H1 (cell line): ENCODE measurements at regions of chr20 and their contacts with region 1.

Region 1: GRCh38 chr20:324177-325044 is 941 bp upstream of the SOX12 start:
- DNase-seq: peak in 1 of 2 experiments; percentile 95
- H3K4me3 ChIP-seq: peak overlapping the region; percentile 63 to 92 (median 73)
- H3K27ac ChIP-seq: peak overlapping the region; percentile 69
- H3K4me1 ChIP-seq: peaks cover 4 to 27% (median 17%) of the 10 kb centered on the region in 4 experiments
- H3K27me3 ChIP-seq: no peaks in the 10 kb centered on the region
- CTCF ChIP-seq: peak; percentile 26 to 44 (median 33); a peak in 3 of 4 replicates
- EP300 ChIP-seq: peak in 1 of 2 experiments; percentile 22; a peak in 1 of 3 replicates
- POLR2A ChIP-seq: peak in 1 of 2 experiments; percentile 56; a peak in 2 of 3 replicates
- RAD21 ChIP-seq: peak; percentile 20 to 42

Region 2: GRCh38 chr20:251354-251753 is 73.1 kb before region 1 on chr20:
- CTCF ChIA-PET with region 1: no interaction called
- POLR2A ChIA-PET with region 1: no interaction called
- DNase-seq: no peak
- H3K4me3 ChIP-seq: no peak overlapping the region
- H3K27ac ChIP-seq: no peak overlapping the region
- H3K4me1 ChIP-seq: 0 out of 7 replicates have a peak, but pooled peaks cover 0 to 2% (median 0%) of the 10 kb centered on the region in 4 experiments
- H3K27me3 ChIP-seq: peaks cover 21 to 52% (median 48%) of the 10 kb centered on the region in 4 experiments
- CTCF ChIP-seq: no peak
- EP300 ChIP-seq: no peak
- POLR2A ChIP-seq: no peak
- RAD21 ChIP-seq: no peak

Region 3: GRCh38 chr20:266596-267562 is 57.5 kb before region 1 on chr20:
- CTCF ChIA-PET with region 1: interaction called, 45 read pairs
- POLR2A ChIA-PET with region 1: interaction called, 9 read pairs
- DNase-seq: peak; percentile 84 to 99
- H3K4me3 ChIP-seq: peak overlapping the region; percentile 4 to 53 (median 31); a peak in 6 of 8 replicates
- H3K27ac ChIP-seq: no peak overlapping the region
- H3K4me1 ChIP-seq: 0 out of 7 replicates have a peak, but pooled peaks cover 0 to 2% (median 0%) of the 10 kb centered on the region in 4 experiments
- H3K27me3 ChIP-seq: peaks cover 0 to 26% (median 11%) of the 10 kb centered on the region in 4 experiments; a peak in 6 of 7 replicates
- CTCF ChIP-seq: peak; percentile 96 to 98 (median 97)
- EP300 ChIP-seq: no peak
- POLR2A ChIP-seq: peak in 1 of 2 experiments; percentile 94; a peak in 2 of 3 replicates
- RAD21 ChIP-seq: peak; percentile 95

Region 4: DNA sequence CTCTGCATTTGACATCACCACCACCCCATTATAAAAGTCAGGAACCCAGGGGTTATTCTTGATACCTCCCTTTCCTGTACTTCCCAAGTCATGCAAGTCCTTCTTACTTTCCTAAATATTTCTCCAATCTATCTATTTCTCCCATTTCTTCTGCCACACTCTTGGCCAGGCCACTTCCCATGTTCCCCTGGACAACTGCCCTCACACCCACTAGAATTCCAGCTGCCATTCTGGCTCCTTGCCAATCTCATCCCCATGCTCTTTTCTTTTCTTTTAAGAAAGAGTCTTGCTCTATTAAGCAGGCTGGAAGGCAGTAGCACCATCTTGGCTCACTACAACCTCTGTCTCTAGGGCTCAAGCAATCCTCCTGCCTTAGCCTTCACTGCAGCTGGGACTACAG is 51.7 kb before region 1 on chr20:
- CTCF ChIA-PET with region 1: interaction called, 54 read pairs
- POLR2A ChIA-PET with region 1: interaction called, 28 read pairs
- DNase-seq: no peak
- H3K4me3 ChIP-seq: no peak overlapping the region
- H3K27ac ChIP-seq: no peak overlapping the region
- H3K4me1 ChIP-seq: peaks cover 0 to 4% (median 2%) of the 10 kb centered on the region in 4 experiments; a peak in 4 of 7 replicates
- H3K27me3 ChIP-seq: no peaks in the 10 kb centered on the region; a peak in 1 of 7 replicates
- CTCF ChIP-seq: no peak
- EP300 ChIP-seq: no peak
- POLR2A ChIP-seq: no peak
- RAD21 ChIP-seq: no peak

Region 5: DNA sequence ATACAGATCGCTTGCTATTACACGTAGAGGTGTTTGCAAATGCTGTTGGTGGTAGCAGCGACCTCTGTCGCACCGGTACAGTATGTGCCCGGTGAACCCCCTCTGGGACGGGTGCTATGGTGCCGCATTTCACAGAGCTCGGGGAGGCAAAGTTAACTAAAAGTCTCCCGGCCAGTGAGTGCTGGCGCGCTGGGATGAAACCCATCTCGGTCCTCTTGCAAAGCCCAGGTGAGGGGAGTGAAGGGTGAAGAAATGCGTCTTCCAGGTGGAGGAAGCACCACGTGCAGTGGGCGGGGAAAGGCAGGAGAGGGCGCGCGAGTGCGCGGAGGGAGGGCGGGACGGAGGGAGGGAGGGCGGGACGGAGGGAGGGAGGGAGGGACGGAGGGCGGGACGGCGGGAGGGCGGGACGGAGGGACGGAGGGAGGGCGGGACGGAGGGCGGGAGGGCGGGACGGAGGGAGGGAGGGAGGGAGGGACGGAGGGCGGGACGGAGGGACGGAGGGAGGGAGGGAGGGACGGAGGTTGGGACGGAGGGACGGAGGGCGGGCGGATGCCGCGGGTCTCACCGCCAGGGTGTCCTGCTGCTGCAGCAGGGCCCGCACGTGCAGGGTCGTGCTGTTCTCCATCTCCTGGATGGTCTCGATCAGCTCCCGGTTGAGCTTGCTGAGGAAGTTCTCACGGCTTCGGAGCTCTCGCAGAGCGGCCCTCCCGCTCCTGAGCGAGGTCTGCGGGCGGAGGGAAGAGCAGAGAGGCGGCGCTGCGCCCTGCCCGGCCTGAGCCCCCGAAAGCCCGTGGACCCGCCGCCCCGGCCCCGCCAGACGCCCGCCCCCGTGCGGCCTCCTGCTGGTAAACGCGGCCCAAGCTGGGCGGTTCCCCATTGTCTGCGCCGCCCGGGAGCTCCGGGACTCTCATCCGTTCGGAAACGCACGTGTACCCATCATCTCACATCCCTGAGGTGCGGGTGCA is 45.5 kb before region 1 on chr20:
- CTCF ChIA-PET with region 1: interaction called, 54 read pairs
- POLR2A ChIA-PET with region 1: interaction called, 28 read pairs
- DNase-seq: peak in 1 of 2 experiments; percentile 61
- H3K4me3 ChIP-seq: peak overlapping the region; percentile 4 to 47 (median 20); a peak in 6 of 8 replicates
- H3K27ac ChIP-seq: no peak overlapping the region
- H3K4me1 ChIP-seq: peaks cover 0 to 4% (median 4%) of the 10 kb centered on the region in 4 experiments; a peak in 4 of 7 replicates
- H3K27me3 ChIP-seq: peaks cover 0 to 2% (median under 1%) of the 10 kb centered on the region in 4 experiments; a peak in 2 of 7 replicates
- CTCF ChIP-seq: peak in 2 of 3 experiments; percentile 51 to 63; a peak in 3 of 4 replicates
- EP300 ChIP-seq: no peak
- POLR2A ChIP-seq: no peak
- RAD21 ChIP-seq: no peak; a peak in 2 of 4 replicates

Region 6: DNA sequence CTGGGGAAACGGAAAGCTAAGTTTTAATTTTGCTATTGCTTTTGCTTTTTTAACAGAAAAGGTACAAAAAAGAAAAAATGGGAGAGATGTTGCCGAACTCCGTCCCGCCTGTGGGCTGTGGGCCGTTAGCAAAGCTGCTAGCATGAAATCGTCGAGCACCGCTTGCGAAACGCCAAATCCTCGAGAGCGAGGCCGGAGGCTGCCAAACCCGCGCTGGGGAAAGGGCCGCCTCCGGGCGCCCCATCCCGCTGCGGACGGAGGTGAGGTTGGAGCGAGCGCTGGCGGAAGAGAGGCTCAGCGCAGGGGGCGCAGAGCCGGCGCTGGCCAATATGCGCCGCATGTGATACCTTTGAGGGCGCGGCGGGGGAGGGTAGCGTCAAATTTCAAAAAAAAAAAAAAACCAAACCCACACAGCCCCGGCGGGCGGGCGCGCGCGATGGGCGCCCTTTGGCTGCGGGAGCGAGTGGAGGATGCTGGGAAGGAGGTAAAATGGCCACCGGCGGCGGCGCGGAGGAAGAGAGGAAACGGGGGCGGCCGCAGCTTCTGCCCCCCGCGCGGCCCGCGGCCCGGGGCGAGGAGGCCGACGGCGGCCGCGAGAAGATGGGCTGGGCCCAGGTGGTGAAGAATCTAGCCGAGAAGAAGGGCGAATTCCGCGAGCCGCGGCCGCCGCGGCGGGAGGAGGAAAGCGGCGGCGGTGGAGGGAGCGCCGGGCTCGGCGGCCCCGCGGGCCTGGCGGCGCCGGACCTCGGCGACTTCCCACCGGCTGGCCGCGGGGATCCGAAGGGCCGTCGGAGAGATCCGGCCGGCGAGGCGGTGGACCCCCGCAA is 27.1 kb before region 1 on chr20 and contains the start of gene ZCCHC3:
- CTCF ChIA-PET with region 1: interaction called, 36 read pairs
- POLR2A ChIA-PET with region 1: interaction called, 85 read pairs
- DNase-seq: peak; percentile 80 to 88
- H3K4me3 ChIP-seq: peak within 1 kb of the TSS; percentile 69 to 99 (median 96)
- H3K27ac ChIP-seq: peak within 1 kb of the TSS; percentile 90
- H3K4me1 ChIP-seq: peaks cover 12 to 22% (median 14%) of the 10 kb centered on the region in 4 experiments
- H3K27me3 ChIP-seq: peaks cover 0 to 7% (median 1%) of the 10 kb centered on the region in 4 experiments; a peak in 2 of 7 replicates
- CTCF ChIP-seq: peak in 2 of 3 experiments; percentile 4 to 18; a peak in 2 of 4 replicates
- EP300 ChIP-seq: no peak; a peak in 1 of 3 replicates
- POLR2A ChIP-seq: peak; percentile 71 to 77; a peak in 2 of 3 replicates
- RAD21 ChIP-seq: peak in 1 of 2 experiments; percentile 36; a peak in 2 of 4 replicates
- total RNA-seq, gene ZCCHC3: 52.4 and 54.0 TPM in 2 replicates

Region 7: GRCh38 chr20:309841-310644 is 14.4 kb before region 1 on chr20:
- CTCF ChIA-PET with region 1: interaction called, 30 read pairs
- POLR2A ChIA-PET with region 1: interaction called, 97 read pairs
- DNase-seq: peak; percentile 98 to 99
- H3K4me3 ChIP-seq: peak overlapping the region; percentile 42 to 60 (median 59)
- H3K27ac ChIP-seq: peak overlapping the region; percentile 69
- H3K4me1 ChIP-seq: peaks cover 4 to 11% (median 6%) of the 10 kb centered on the region in 4 experiments
- H3K27me3 ChIP-seq: no peaks in the 10 kb centered on the region
- CTCF ChIP-seq: no peak
- EP300 ChIP-seq: no peak
- POLR2A ChIP-seq: peak; percentile 54 to 77
- RAD21 ChIP-seq: no peak

Region 8: DNA sequence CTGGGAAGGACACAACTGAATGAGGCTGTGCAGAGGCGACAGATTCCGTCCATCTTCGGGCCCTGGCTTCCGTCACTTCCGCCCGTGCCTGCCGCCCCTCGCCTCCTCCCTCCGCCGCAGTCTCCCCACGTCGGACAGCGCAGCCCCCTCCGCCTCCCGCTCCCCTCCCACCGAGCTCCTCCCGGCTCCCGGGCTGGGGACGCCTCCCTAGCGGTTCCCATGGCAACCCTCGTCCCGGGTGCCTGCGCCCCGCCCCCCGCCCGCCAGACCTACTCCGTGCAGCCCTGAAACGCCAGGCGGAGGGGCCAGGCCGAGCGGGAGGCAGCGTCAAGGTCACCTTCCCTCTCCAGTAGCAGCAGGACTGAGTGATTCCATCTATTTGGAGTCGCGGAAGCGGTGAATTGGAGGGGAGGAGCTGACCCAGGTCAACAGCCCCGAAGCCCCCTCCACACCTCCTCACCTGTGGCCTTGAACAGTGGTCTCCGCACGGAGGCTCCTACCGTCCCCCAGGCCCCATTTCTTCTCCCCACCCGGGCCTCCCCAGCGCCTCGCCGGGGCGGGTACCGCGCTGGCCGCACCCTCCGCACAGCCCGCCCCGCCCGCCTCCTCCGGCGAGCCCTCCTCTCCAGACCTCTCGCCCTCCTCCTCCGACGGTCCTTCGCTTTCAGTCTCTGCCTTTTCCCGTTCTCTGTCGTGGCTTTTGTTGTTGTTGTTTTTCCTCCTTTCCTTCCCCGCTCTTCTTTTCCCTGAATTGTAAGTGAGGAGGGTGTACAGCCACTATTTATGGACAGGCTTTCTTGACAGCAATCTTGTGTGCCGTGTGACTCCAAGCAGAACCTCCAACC is 23.5 kb after region 1 on chr20:
- CTCF ChIA-PET with region 1: interaction called, 33 read pairs
- POLR2A ChIA-PET with region 1: interaction called, 36 read pairs
- DNase-seq: peak; percentile 89 to 94
- H3K4me3 ChIP-seq: peak overlapping the region; percentile 63 to 90 (median 66)
- H3K27ac ChIP-seq: peak overlapping the region; percentile 85
- H3K4me1 ChIP-seq: peaks cover 0 to 12% (median 8%) of the 10 kb centered on the region in 4 experiments; a peak in 4 of 7 replicates
- H3K27me3 ChIP-seq: peaks cover 0 to 3% (median 0%) of the 10 kb centered on the region in 4 experiments; a peak in 3 of 7 replicates
- CTCF ChIP-seq: no peak
- EP300 ChIP-seq: peak in 1 of 2 experiments; percentile 65; a peak in 1 of 3 replicates
- POLR2A ChIP-seq: peak; percentile 32 to 76
- RAD21 ChIP-seq: no peak

Region 9: DNA sequence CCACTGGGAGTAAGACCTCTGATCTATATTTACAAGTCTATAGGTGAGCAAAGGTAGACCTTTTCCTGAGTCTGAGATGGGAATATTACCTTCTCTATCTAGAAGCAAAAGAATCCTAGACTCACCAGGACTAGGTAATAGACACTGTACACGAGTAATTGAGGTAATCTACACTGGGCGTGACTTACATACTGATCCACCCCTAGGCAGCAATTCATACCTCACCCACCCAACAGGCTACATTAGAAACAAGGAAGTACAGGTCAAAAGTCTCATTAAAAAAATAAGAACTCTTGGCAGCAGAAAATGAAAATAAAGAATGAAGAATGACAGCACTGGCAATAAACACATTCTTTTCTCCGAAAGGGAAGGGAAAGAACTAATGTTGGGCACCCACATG is 211.5 kb after region 1 on chr20:
- CTCF ChIA-PET with region 1: no interaction called
- POLR2A ChIA-PET with region 1: no interaction called
- DNase-seq: no peak
- H3K4me3 ChIP-seq: no peak overlapping the region
- H3K27ac ChIP-seq: no peak overlapping the region
- H3K4me1 ChIP-seq: peaks cover 2 to 13% (median 5%) of the 10 kb centered on the region in 4 experiments; a peak in 6 of 7 replicates
- H3K27me3 ChIP-seq: no peaks in the 10 kb centered on the region
- CTCF ChIP-seq: no peak
- EP300 ChIP-seq: no peak
- POLR2A ChIP-seq: no peak
- RAD21 ChIP-seq: no peak

Region 10: GRCh38 chr20:944774-945410 is 620.5 kb after region 1 on chr20:
- CTCF ChIA-PET with region 1: no interaction called
- POLR2A ChIA-PET with region 1: no interaction called
- DNase-seq: no peak
- H3K4me3 ChIP-seq: peak overlapping the region in 2 of 4 experiments; percentile 14 to 43; a peak in 2 of 8 replicates
- H3K27ac ChIP-seq: no peak overlapping the region
- H3K4me1 ChIP-seq: peaks cover 0 to 14% (median 8%) of the 10 kb centered on the region in 4 experiments; a peak in 5 of 7 replicates
- H3K27me3 ChIP-seq: no peaks in the 10 kb centered on the region
- CTCF ChIP-seq: no peak
- EP300 ChIP-seq: no peak
- POLR2A ChIP-seq: no peak
- RAD21 ChIP-seq: no peak